Esophagus squamous epithelium (tissue), 5 donors: ENCODE measurements at regions of chr18 and their contacts with region 1.

Region 1: GRCh38 chr18:21914739-21915319 is 174.2 kb downstream of the MIB1 start:
- DNase-seq: no peak
- H3K4me3 ChIP-seq: no peak overlapping the region
- H3K27ac ChIP-seq: no peak overlapping the region
- H3K4me1 ChIP-seq: no peaks in the 10 kb centered on the region
- H3K27me3 ChIP-seq: no peaks in the 10 kb centered on the region
- CTCF ChIP-seq: peak in 2 of 6 experiments; percentile 28 to 43
- POLR2A ChIP-seq: no peak

Region 2: DNA sequence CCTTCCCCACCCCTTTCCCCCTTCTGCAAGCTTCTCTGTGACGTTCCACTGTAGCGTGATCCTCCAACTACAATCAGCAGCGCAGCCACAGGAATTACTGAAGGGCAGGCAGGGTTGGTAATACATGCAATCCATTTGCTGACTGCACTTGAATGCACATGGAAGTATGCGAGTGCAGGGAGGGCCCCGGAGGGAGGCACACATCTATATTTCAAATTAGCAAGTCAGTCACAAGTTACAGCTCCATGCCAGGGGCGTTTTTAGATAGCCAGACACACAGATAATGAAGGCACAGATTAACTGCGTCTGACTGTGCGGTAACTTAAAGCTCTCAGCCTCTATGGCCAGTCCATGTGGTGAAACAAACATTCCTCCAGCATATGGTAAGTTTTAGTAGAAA is 45.4 kb after region 1 on chr18:
- intact Hi-C with region 1: loop called (anchors 5 kb)
- DNase-seq: no peak
- H3K4me3 ChIP-seq: no peak overlapping the region
- H3K27ac ChIP-seq: no peak overlapping the region
- H3K4me1 ChIP-seq: no peaks in the 10 kb centered on the region
- H3K27me3 ChIP-seq: peaks cover 0 to 7% (median 0%) of the 10 kb centered on the region in 4 donors
- CTCF ChIP-seq: no peak
- POLR2A ChIP-seq: no peak